ENCODE measurements at regions of chr5 and their contacts with region 1.

Region 1: DNA sequence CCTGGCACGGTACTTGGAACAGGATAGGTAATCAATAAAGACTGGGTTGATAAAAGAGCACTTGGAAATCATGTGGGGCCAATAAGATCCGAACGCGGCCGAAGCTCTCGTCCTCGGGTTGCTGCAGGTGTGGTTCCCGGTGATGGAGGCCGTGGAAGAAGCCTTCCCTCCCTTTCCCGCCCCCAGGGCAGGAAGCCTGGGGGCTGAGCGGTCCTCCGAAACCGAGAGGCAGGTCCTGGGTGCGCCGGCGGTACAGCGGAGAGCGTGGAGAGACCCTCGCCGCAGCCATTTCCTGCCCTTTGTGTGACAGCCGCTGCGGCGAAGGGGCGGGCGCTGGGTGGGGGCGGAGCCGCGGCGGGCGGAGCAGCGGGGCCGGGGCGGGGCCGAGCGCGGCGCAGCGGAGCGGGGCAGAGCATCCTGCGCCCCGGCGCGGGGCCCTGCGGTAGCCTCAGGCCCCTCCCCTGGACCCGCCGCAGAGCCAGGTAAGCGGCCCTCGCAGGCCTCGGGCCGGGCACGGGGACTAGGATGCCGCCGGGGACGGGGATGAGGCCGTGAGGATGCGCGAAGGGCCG is at the start of gene CYFIP2:
- DNase-seq: peak; percentile 87
- H3K4me3 Mint-ChIP-seq: peak within 1 kb of the TSS; percentile 94
- H3K27ac Mint-ChIP-seq: peak within 1 kb of the TSS; percentile 94
- H3K4me1 Mint-ChIP-seq: peaks cover 65% of the 10 kb centered on the region
- H3K27me3 Mint-ChIP-seq: no peaks in the 10 kb centered on the region
- total RNA-seq, gene CYFIP2: 490 to 492 TPM

Region 2: GRCh38 chr5:157020490-157021222 is 245.1 kb before region 1 on chr5:
- CTCF ChIA-PET with region 1: no interaction called
- intact Hi-C with region 1: no loop called
- DNase-seq: no peak
- H3K4me3 Mint-ChIP-seq: no peak overlapping the region
- H3K27ac Mint-ChIP-seq: no peak overlapping the region
- H3K4me1 Mint-ChIP-seq: peaks cover 19% of the 10 kb centered on the region
- H3K27me3 Mint-ChIP-seq: no peaks in the 10 kb centered on the region

Region 3: GRCh38 chr5:157312492-157312891 is 46.7 kb after region 1 on chr5:
- CTCF ChIA-PET with region 1: interaction called, 7 read pairs
- intact Hi-C with region 1: loop called (anchors 1 kb)
- DNase-seq: peak; percentile 82
- H3K4me3 Mint-ChIP-seq: no peak overlapping the region
- H3K27ac Mint-ChIP-seq: peak overlapping the region; percentile 90
- H3K4me1 Mint-ChIP-seq: peaks cover 41% of the 10 kb centered on the region
- H3K27me3 Mint-ChIP-seq: no peaks in the 10 kb centered on the region

Region 4: GRCh38 chr5:157366741-157367674 is 101.2 kb after region 1 on chr5:
- CTCF ChIA-PET with region 1: no interaction called
- intact Hi-C with region 1: no loop called
- DNase-seq: no peak
- H3K4me3 Mint-ChIP-seq: no peak overlapping the region
- H3K27ac Mint-ChIP-seq: peak overlapping the region; percentile 24
- H3K4me1 Mint-ChIP-seq: peaks cover 25% of the 10 kb centered on the region
- H3K27me3 Mint-ChIP-seq: no peaks in the 10 kb centered on the region

Region 5: DNA sequence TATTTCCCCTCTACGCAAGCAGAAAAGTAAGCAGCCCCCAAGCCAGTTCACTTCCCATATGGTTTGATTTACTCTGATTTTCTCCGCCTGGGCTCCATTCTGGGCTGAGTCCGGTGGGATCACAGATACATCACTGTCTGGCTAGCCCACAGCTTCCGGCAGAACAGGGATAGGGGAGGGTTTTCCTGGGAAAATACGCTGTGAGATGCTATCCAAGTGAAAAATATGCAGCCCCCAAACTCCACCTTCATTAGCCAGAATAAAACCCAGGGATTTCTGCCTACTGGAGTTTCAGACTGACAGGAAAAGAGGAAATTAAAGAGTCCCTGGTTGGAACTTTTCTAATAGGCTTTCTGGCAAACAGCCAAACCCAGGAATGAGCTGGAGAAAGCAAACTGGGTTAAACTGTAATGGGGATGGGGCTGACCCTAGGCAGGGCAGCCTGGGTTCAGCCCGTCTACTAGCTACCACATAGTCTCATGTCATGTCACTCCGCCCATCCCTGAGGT is 177.3 kb after region 1 on chr5:
- CTCF ChIA-PET with region 1: no interaction called
- intact Hi-C with region 1: no loop called
- DNase-seq: no peak
- H3K4me3 Mint-ChIP-seq: no peak overlapping the region
- H3K27ac Mint-ChIP-seq: no peak overlapping the region
- H3K4me1 Mint-ChIP-seq: no peaks in the 10 kb centered on the region
- H3K27me3 Mint-ChIP-seq: peaks cover 3% of the 10 kb centered on the region